ENCODE measurements at regions of chr1 and their contacts with region 1.

Region 1: DNA sequence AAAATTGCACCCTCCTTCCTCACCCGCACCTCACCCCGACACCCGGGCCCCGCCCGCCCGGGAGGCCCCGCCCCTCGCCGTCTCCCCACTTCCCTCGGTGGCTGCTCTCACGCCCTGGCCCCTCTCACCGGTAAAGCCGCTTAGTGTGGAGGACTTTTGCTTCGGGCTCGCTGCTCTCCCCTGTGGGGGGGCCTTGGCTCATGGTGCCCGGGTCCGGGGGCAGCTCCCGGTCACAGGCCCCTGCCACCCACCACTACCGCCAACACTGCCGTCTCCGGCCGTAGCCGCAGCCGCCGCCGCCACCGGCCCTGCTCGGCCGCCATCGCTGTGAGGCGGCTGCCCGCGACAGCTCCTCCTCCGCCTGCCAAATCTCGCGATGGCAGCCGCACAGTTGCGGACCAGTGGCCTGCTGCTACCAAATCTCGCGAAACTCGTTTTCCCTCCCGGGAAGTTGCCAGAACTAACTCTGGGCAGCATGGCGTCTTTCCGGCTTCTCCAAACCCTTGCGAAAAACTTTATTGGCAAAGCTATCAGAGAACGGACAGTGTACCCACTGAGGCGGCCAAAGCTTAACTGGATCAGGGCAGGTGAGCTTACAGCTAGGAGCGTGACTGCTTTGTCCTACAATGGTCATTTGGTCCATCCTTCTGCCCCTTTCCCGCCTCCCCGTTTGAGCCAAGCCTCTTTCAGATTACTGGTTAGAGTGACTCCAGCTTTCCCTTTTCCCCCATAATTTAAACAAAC is at the start of gene SMG5:
- DNase-seq: peak; percentile 97
- H3K4me3 ChIP-seq: peak within 1 kb of the TSS; percentile 95
- H3K27ac ChIP-seq: peak within 1 kb of the TSS; percentile 68
- H3K27me3 ChIP-seq: no peaks in the 10 kb centered on the region
- CTCF ChIP-seq: no peak
- polyA plus RNA-seq, gene SMG5: 20.8 and 27.8 TPM in 2 replicates

Region 2: DNA sequence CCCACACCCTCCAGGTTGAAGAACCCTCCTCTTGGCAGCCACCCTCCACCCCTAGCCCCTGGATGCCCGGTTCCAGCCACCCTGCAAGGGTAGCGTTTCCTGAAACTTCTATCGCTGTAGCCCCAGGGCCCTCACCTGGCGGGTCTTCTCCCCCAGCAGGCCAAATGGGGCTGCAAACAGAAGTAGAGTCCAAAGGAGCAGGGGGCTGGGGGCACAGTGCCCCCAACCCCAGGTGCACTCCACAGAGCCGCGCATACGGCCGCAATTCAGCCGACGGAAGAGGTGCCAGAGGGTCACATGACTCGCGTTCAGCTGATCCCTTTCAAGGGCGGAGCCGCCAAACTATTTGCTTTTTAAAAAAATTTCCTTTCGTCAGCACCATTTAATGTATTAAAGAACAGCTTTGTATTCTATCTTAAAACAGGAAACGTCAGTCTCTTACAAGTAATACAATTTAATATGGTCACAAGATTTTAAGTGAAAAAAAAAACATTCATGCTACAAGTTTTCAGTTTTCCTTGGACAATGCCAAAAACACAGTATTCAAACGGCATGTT is 12.8 kb after region 1 on chr1 and contains the start of gene GLMP:
- CTCF ChIA-PET with region 1: interaction called, 5 read pairs
- POLR2A ChIA-PET with region 1: interaction called, 14 read pairs
- DNase-seq: no peak
- H3K4me3 ChIP-seq: peak within 1 kb of the TSS; percentile 92
- H3K27ac ChIP-seq: no peak within 1 kb of the TSS
- H3K27me3 ChIP-seq: no peaks in the 10 kb centered on the region
- CTCF ChIP-seq: no peak
- polyA plus RNA-seq, gene GLMP: 25.5 and 36.4 TPM in 2 replicates

Measured in AG04450 (cell line).